ENCODE measurements at regions of chr15 and their contacts with region 1.

Region 1: GRCh38 chr15:44319385-44319784 is 30.9 kb downstream of the GOLM2 start:
- DNase-seq: peak; percentile 57
- H3K4me3 ChIP-seq: no peak overlapping the region
- H3K27ac ChIP-seq: no peak overlapping the region
- H3K4me1 ChIP-seq: no peaks in the 10 kb centered on the region
- CTCF ChIP-seq: peak; percentile 81

Region 2: DNA sequence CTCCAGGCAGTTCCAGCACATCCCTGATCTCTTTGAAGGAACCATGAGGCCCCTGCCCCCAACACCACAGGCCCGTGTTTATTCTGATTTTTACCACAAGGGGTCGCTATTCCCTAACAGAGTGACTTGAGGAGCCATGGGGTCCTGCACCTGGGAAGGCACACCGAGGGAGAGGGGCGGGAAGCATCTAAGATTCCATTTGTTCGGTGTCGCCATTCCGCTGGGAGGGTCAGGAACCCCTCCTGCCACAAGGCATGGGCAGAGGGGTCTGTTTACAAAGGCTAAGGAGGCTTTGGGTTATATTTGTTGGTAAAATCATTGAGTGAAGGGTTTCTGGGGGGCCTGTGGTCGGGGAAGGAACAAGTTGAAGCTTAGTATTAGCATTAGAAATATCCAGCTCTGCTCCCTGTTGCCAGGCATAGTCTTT is 415.5 kb before region 1 on chr15:
- CTCF ChIA-PET with region 1: no interaction called
- POLR2A ChIA-PET with region 1: interaction called, 3 read pairs
- intact Hi-C with region 1: loop called (anchors 1 kb)
- DNase-seq: peak; percentile 78
- H3K4me3 ChIP-seq: no peak overlapping the region
- H3K27ac ChIP-seq: no peak overlapping the region
- H3K4me1 ChIP-seq: peaks cover 3% of the 10 kb centered on the region
- CTCF ChIP-seq: peak; percentile 93

Region 3: DNA sequence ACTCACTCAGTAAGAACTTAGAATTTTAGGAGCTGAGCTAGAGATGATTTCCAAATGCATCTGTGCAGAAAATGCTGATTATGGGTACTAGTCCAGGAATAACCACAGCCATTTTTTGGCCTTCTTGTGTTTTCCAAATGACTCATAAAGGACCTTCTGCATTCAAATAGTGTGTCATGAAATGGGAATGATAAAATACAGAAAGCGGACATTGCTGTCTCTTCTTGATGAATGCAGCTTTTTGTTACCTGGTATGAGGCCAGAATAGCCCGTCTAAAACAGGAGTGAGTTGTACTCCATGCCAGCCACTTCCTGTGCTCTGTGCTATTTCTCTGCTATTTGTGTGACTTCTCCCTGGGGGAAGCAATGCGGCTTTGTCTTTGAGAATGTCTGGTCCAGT is 103.8 kb before region 1 on chr15:
- CTCF ChIA-PET with region 1: no interaction called
- POLR2A ChIA-PET with region 1: no interaction called
- intact Hi-C with region 1: loop called (anchors 1 kb)
- DNase-seq: no peak
- H3K4me3 ChIP-seq: no peak overlapping the region
- H3K27ac ChIP-seq: no peak overlapping the region
- H3K4me1 ChIP-seq: no peaks in the 10 kb centered on the region
- CTCF ChIP-seq: no peak

Region 4: GRCh38 chr15:44246521-44247268 is 72.7 kb before region 1 on chr15:
- CTCF ChIA-PET with region 1: no interaction called
- POLR2A ChIA-PET with region 1: no interaction called
- intact Hi-C with region 1: no loop called
- DNase-seq: no peak
- H3K4me3 ChIP-seq: no peak overlapping the region
- H3K27ac ChIP-seq: no peak overlapping the region
- H3K4me1 ChIP-seq: no peaks in the 10 kb centered on the region
- CTCF ChIP-seq: no peak

Region 5: GRCh38 chr15:44296625-44297524 is 22.5 kb before region 1 on chr15:
- CTCF ChIA-PET with region 1: interaction called, 3 read pairs
- POLR2A ChIA-PET with region 1: interaction called, 10 read pairs
- intact Hi-C with region 1: no loop called
- DNase-seq: no peak
- H3K4me3 ChIP-seq: no peak overlapping the region
- H3K27ac ChIP-seq: no peak overlapping the region
- H3K4me1 ChIP-seq: peaks cover 29% of the 10 kb centered on the region
- CTCF ChIP-seq: no peak

Region 6: DNA sequence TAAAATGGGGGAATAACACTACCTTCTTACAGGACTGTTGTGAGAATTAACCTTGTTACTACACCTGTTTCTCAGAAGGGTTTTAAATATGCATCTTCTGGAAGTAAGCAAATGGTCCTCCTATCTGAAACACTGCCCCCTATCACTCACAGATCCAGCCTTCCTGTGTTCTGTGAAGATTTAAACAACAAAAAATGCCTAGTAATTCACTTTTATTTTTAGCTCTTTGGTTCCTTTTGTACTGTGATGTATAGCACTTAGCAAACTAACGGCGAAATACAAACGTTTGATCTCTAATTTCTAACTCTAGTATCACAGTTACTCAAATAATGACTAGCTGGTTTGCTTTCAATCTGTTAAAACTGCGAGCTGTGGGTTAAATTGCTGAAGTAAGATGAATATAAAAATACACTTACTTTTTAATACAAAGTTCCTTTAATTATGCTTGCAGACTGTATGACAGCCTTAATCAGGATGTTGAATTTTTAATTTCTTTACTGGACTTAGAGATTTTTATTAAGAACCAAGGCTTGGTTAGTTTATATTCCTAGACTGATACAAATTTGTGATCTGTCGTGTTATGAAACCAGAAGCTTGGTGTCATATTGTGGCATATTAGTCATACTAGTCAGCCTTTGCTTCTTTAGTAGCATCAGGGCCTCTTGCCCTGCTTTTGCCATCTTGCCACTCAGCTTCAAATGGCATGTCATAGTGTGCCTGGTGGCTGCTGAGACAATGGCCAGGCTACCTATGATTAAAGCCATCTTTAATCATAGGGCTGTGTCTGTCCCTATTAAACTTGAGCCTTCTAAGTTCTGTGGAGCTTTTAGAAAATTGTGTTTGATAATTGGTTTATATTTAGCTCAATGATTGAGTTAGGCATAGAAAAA is 226.8 kb after region 1 on chr15:
- CTCF ChIA-PET with region 1: no interaction called
- POLR2A ChIA-PET with region 1: no interaction called
- intact Hi-C with region 1: no loop called
- DNase-seq: peak; percentile 35
- H3K4me3 ChIP-seq: no peak overlapping the region
- H3K27ac ChIP-seq: no peak overlapping the region
- H3K4me1 ChIP-seq: peaks cover 24% of the 10 kb centered on the region
- CTCF ChIP-seq: peak; percentile 82